ENCODE measurements at regions of chr5 and their contacts with region 1.

Region 1: DNA sequence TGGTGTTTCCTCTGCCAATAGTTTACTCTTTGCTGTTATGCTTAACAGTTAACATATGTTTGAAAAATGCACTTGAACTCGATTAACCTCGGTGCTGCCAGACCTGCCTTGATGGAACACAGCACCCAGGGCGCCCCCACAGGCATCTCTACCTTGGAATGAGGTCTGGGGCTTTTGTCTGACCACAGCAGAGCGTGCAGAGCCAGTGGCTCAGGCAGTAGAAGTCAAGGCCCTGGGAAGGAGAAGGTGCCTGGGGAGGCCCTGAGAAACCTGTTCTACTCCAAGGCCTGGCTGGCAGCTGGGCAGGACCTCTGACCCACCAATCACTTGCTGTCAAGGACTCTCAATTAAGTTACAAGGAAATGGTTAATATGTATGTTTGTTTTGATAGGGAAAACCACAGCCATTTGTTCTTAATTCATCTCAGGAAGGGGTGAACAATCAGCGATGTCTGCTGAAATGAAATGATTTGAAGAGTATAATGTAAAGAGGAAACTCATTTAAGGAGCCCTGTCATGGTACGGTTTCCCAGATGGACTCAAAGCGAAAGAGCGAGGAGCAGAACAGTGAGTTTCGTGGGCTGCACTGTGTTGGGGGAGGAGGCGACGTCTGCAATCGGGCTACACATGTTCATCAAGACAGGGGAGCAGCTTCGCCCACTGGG is 21.9 kb downstream of the MACROH2A1 start:
- DNase-seq: peak; percentile 66
- CTCF ChIP-seq: no peak

Region 2: GRCh38 chr5:135392256-135392655 is 15.2 kb after region 1 on chr5:
- CTCF ChIA-PET with region 1: interaction called, 10 read pairs
- POLR2A ChIA-PET with region 1: no interaction called
- DNase-seq: no peak
- CTCF ChIP-seq: no peak

Measured in GM10248 (cell line).